CD4-positive, alpha-beta memory T cell (primary cell): ENCODE measurements at regions of chr2 and their contacts with region 1.

Region 1: GRCh38 chr2:54522624-54523281 is 66.6 kb downstream of the SPTBN1 start:
- DNase-seq: peak; percentile 70 to 79 (median 73)
- H3K4me3 ChIP-seq: no peak overlapping the region
- H3K4me3 Mint-ChIP-seq: peak overlapping the region in 4 of 8 donors; percentile 15 to 78 (median 36)
- H3K27ac ChIP-seq: no peak overlapping the region
- H3K27ac Mint-ChIP-seq: peak overlapping the region in 5 of 7 donors; percentile 42 to 92 (median 78)
- H3K4me1 ChIP-seq: no peaks in the 10 kb centered on the region
- H3K4me1 Mint-ChIP-seq: peaks cover 4 to 6% (median 6%) of the 10 kb centered on the region in 4 donors
- H3K27me3 ChIP-seq: no peaks in the 10 kb centered on the region
- H3K27me3 Mint-ChIP-seq: peaks cover 0 to 5% of the 10 kb centered on the region in 2 donors

Region 2: GRCh38 chr2:54370405-54371104 is 152.2 kb before region 1 on chr2:
- CTCF ChIA-PET with region 1: no interaction called
- POLR2A ChIA-PET with region 1: no interaction called
- intact Hi-C with region 1: no loop called
- DNase-seq: no peak
- H3K4me3 ChIP-seq: no peak overlapping the region
- H3K4me3 Mint-ChIP-seq: no peak overlapping the region
- H3K27ac ChIP-seq: no peak overlapping the region
- H3K27ac Mint-ChIP-seq: no peak overlapping the region
- H3K4me1 ChIP-seq: no peaks in the 10 kb centered on the region
- H3K4me1 Mint-ChIP-seq: no peaks in the 10 kb centered on the region
- H3K27me3 ChIP-seq: no peaks in the 10 kb centered on the region
- H3K27me3 Mint-ChIP-seq: peaks cover 3 to 15% of the 10 kb centered on the region in 2 donors

Region 3: GRCh38 chr2:54558188-54559005 is 35.6 kb after region 1 on chr2:
- CTCF ChIA-PET with region 1: interaction called, 42 read pairs
- POLR2A ChIA-PET with region 1: interaction called, 5 read pairs
- intact Hi-C with region 1: loop called (anchors 2 kb)
- DNase-seq: peak; percentile 74 to 85 (median 75)
- H3K4me3 ChIP-seq: peak overlapping the region; percentile 94 to 99
- H3K4me3 Mint-ChIP-seq: peak overlapping the region; percentile 94 to 100 (median 98)
- H3K27ac ChIP-seq: peak overlapping the region; percentile 83
- H3K27ac Mint-ChIP-seq: peak overlapping the region; percentile 88 to 97 (median 94)
- H3K4me1 ChIP-seq: peaks cover 32% of the 10 kb centered on the region
- H3K4me1 Mint-ChIP-seq: peaks cover 34 to 68% (median 40%) of the 10 kb centered on the region in 4 donors
- H3K27me3 ChIP-seq: no peaks in the 10 kb centered on the region
- H3K27me3 Mint-ChIP-seq: no peaks in the 10 kb centered on the region

Region 4: GRCh38 chr2:54618646-54619565 is 96.2 kb after region 1 on chr2:
- CTCF ChIA-PET with region 1: interaction called, 18 read pairs
- POLR2A ChIA-PET with region 1: no interaction called
- intact Hi-C with region 1: loop called (anchors 5 kb)
- DNase-seq: no peak
- H3K4me3 ChIP-seq: no peak overlapping the region
- H3K4me3 Mint-ChIP-seq: peak overlapping the region in 3 of 8 donors; percentile 3 to 46 (median 37)
- H3K27ac ChIP-seq: no peak overlapping the region
- H3K27ac Mint-ChIP-seq: peak overlapping the region; percentile 10 to 89 (median 68)
- H3K4me1 ChIP-seq: peaks cover 17% of the 10 kb centered on the region
- H3K4me1 Mint-ChIP-seq: peaks cover 19 to 36% (median 24%) of the 10 kb centered on the region in 4 donors
- H3K27me3 ChIP-seq: no peaks in the 10 kb centered on the region
- H3K27me3 Mint-ChIP-seq: no peaks in the 10 kb centered on the region

Region 5: DNA sequence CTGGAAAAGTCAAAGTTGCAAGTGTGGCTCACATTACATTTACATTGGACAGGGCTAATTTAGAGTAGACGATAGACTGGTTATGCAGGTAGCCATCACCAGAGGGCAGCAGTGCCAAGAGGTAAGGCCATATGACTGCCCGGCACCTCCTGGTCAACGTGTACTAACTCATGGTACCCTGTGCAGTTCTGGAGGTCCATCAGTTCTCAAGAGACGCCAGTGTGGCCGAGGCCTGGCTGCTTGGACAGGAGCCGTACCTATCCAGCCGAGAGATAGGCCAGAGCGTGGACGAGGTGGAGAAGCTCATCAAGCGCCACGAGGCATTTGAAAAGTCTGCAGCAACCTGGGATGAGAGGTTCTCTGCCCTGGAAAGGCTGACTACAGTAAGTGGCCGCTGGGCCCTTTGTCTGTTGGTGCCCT is 134.9 kb after region 1 on chr2:
- CTCF ChIA-PET with region 1: interaction called, 9 read pairs
- POLR2A ChIA-PET with region 1: no interaction called
- intact Hi-C with region 1: loop called (anchors 2 kb)
- DNase-seq: peak in 1 of 5 donors; percentile 11
- H3K4me3 ChIP-seq: no peak overlapping the region
- H3K4me3 Mint-ChIP-seq: no peak overlapping the region
- H3K27ac ChIP-seq: no peak overlapping the region
- H3K27ac Mint-ChIP-seq: peak overlapping the region in 2 of 7 donors; percentile 25 to 79
- H3K4me1 ChIP-seq: no peaks in the 10 kb centered on the region
- H3K4me1 Mint-ChIP-seq: peaks cover 0 to 2% (median 0%) of the 10 kb centered on the region in 4 donors
- H3K27me3 ChIP-seq: no peaks in the 10 kb centered on the region
- H3K27me3 Mint-ChIP-seq: no peaks in the 10 kb centered on the region

Region 6: DNA sequence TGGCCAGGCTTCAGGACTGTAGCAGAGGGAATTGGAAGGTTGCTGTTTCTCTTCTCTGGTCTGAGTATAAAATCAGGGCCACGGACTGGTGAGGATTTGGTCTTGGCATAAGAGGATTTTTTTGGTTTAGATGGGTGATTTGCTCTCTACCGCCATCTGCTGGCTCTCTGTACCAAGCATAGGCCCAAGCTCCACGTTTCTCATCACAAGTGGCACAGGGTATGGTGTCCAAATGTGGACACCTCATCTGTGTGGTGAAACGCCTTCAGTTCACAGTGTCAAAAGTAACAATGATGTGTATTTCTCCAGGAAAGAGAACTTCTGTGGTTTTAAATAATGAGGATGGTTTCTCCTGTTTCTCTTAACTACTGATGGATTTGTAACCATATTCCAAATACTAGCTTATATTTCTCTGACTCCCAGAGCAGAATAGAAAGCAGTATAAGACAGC is 315.9 kb after region 1 on chr2:
- CTCF ChIA-PET with region 1: interaction called, 37 read pairs
- POLR2A ChIA-PET with region 1: no interaction called
- intact Hi-C with region 1: loop called (anchors 1 kb)
- DNase-seq: peak; percentile 40 to 51 (median 49)
- H3K4me3 ChIP-seq: no peak overlapping the region
- H3K4me3 Mint-ChIP-seq: no peak overlapping the region
- H3K27ac ChIP-seq: no peak overlapping the region
- H3K27ac Mint-ChIP-seq: no peak overlapping the region
- H3K4me1 ChIP-seq: no peaks in the 10 kb centered on the region
- H3K4me1 Mint-ChIP-seq: peaks cover 0 to 2% (median 0%) of the 10 kb centered on the region in 4 donors
- H3K27me3 ChIP-seq: no peaks in the 10 kb centered on the region
- H3K27me3 Mint-ChIP-seq: peaks cover 0 to 1% of the 10 kb centered on the region in 2 donors

Region 7: GRCh38 chr2:55490554-55490953 is 967.8 kb after region 1 on chr2:
- CTCF ChIA-PET with region 1: no interaction called
- POLR2A ChIA-PET with region 1: no interaction called
- intact Hi-C with region 1: no loop called
- DNase-seq: no peak
- H3K4me3 ChIP-seq: no peak overlapping the region
- H3K4me3 Mint-ChIP-seq: no peak overlapping the region
- H3K27ac ChIP-seq: no peak overlapping the region
- H3K27ac Mint-ChIP-seq: no peak overlapping the region
- H3K4me1 ChIP-seq: no peaks in the 10 kb centered on the region
- H3K4me1 Mint-ChIP-seq: no peaks in the 10 kb centered on the region
- H3K27me3 ChIP-seq: no peaks in the 10 kb centered on the region
- H3K27me3 Mint-ChIP-seq: peaks cover 4 to 13% of the 10 kb centered on the region in 2 donors